ENCODE measurements at regions of chr3 and their contacts with region 1.

Region 1: DNA sequence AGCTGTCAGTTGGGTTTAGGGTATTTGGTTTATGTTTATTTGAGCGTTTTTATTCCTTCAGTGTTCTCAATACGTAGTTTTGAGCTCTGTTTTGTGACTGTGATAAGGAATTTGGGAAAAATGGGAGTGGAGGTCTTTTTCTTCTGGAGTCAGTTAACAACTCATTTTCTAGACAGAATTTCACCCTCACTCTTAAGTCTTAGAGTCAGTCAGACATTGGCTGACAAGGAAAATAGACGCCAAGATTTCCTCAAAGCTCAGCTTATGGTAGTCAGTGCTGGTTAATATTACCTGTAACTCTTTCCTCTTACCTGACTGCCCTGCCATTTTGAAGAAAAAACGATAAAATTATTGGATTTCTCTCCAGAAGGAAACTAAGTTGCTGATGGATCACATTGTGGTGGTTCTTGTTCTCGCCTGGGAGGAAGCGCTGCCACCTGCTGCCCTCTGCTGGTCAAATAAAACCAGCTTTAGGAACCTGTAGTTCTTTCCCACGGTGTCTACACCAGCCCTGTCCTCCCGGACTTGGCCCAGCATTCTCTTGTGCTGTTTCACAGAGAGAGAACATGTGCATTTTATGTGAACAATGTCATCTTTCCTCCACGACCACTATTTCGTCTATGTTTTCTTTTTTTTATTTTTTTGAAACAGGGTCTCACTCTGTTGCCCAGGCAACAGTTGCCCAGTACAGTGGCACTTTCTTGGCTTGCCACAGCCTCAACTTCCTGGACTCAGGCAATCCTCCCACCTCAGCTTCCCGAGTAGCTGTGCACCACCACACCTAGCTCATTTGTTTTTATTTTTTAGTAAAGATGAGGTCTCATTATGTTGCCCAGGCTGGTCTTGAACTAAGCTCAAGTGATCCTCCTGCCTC is 41.4 kb upstream of the UMPS start:
- DNase-seq: peak; percentile 30
- ATAC-seq: peak; percentile 94
- H3K4me3 ChIP-seq: no peak overlapping the region
- H3K27ac ChIP-seq: no peak overlapping the region
- H3K4me1 ChIP-seq: no peaks in the 10 kb centered on the region
- H3K27me3 ChIP-seq: no peaks in the 10 kb centered on the region
- CTCF ChIP-seq: peak; percentile 75 to 95 (median 79); a peak in 5 of 6 replicates
- EP300 ChIP-seq: no peak
- POLR2A ChIP-seq: no peak
- RAD21 ChIP-seq: peak; percentile 91

Region 2: GRCh38 chr3:124552239-124552638 is 136.6 kb before region 1 on chr3:
- CTCF ChIA-PET with region 1: interaction called, 577 read pairs
- POLR2A ChIA-PET with region 1: no interaction called
- RAD21 ChIA-PET with region 1: interaction called, 4 read pairs
- SMC1A ChIA-PET with region 1: interaction called, 5 read pairs
- in situ Hi-C with region 1: no loop called
- intact Hi-C with region 1: no loop called
- DNase-seq: no peak
- ATAC-seq: no peak
- H3K4me3 ChIP-seq: no peak overlapping the region
- H3K27ac ChIP-seq: no peak overlapping the region
- H3K4me1 ChIP-seq: no peaks in the 10 kb centered on the region
- H3K27me3 ChIP-seq: no peaks in the 10 kb centered on the region
- CTCF ChIP-seq: no peak
- EP300 ChIP-seq: no peak
- POLR2A ChIP-seq: no peak
- RAD21 ChIP-seq: no peak

Region 3: GRCh38 chr3:124592621-124593441 is 96.0 kb before region 1 on chr3:
- CTCF ChIA-PET with region 1: interaction called, 12 read pairs
- POLR2A ChIA-PET with region 1: no interaction called
- RAD21 ChIA-PET with region 1: interaction called, 8 read pairs
- SMC1A ChIA-PET with region 1: interaction called, 11 read pairs
- in situ Hi-C with region 1: no loop called
- intact Hi-C with region 1: no loop called
- DNase-seq: peak; percentile 70
- ATAC-seq: peak; percentile 91
- H3K4me3 ChIP-seq: peak overlapping the region; percentile 7; the same call in 1 of the 2 replicates
- H3K27ac ChIP-seq: peak overlapping the region; percentile 67
- H3K4me1 ChIP-seq: peaks cover 22% of the 10 kb centered on the region
- H3K27me3 ChIP-seq: no peaks in the 10 kb centered on the region
- CTCF ChIP-seq: no peak
- EP300 ChIP-seq: peak; percentile 11 to 14; a peak in 2 of 4 replicates
- POLR2A ChIP-seq: no peak
- RAD21 ChIP-seq: 0 out of 2 replicates have a peak, but pooled peaks have one; percentile 4

Region 4: DNA sequence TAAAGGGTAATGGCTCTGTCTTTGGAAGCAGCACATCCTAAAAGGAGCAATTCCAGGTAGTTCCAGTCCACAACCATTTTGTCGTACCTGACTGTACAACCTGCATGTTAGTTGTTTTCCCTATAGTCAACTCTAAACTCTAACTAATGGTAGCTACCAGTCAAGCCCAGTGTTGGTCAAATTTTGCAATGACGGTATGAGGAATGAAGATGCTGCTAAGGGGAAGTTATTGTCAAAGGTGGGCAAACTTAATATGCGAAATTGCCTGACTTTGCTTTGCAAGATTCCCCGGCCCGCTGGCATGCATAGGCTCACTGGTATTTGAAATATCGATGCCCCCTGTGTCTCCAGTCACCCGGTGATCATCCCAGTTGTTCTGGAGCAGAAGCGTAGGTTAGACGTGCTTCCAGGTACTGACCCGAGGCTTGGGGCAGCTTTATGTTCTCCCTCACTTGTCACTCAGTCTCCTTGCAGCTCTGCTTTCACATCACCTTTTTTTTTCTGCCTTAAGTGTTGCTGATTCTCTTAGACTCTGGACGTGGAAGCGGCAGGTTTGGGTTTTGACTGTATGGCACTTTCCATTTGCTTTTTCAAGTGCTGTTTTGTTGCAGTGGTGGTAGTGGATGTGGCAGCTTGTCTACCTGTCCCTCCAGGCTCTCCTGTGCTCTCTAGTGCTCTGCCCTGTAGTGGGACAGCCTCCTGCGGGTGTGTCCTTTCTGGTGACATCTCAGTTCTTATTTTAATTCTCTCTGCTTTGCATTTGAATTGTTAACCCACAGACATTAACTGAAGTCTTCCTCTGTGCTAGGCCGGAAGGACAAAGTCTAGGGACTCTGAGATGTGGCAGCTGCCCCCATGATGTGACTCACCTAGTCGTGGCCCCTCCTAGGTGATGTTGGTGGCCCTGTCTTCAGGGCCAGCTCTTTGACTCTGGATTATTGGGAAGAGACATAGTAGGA is 54.3 kb before region 1 on chr3:
- CTCF ChIA-PET with region 1: interaction called, 14 read pairs
- POLR2A ChIA-PET with region 1: no interaction called
- RAD21 ChIA-PET with region 1: interaction called, 17 read pairs
- SMC1A ChIA-PET with region 1: interaction called, 26 read pairs
- in situ Hi-C with region 1: no loop called
- intact Hi-C with region 1: loop called (anchors 10 kb)
- DNase-seq: no peak
- ATAC-seq: peak; percentile 53
- H3K4me3 ChIP-seq: no peak overlapping the region
- H3K27ac ChIP-seq: no peak overlapping the region
- H3K4me1 ChIP-seq: peaks cover 22% of the 10 kb centered on the region
- H3K27me3 ChIP-seq: no peaks in the 10 kb centered on the region
- CTCF ChIP-seq: no peak
- EP300 ChIP-seq: no peak
- POLR2A ChIP-seq: no peak
- RAD21 ChIP-seq: no peak

Region 5: GRCh38 chr3:124660599-124660998 is 28.2 kb before region 1 on chr3:
- CTCF ChIA-PET with region 1: interaction called, 21 read pairs
- POLR2A ChIA-PET with region 1: no interaction called
- RAD21 ChIA-PET with region 1: interaction called, 5 read pairs
- SMC1A ChIA-PET with region 1: interaction called, 9 read pairs
- in situ Hi-C with region 1: no loop called
- intact Hi-C with region 1: no loop called
- DNase-seq: no peak
- ATAC-seq: no peak
- H3K4me3 ChIP-seq: no peak overlapping the region
- H3K27ac ChIP-seq: no peak overlapping the region
- H3K4me1 ChIP-seq: peaks cover 10% of the 10 kb centered on the region; the same call in 1 of the 2 replicates
- H3K27me3 ChIP-seq: no peaks in the 10 kb centered on the region
- CTCF ChIP-seq: no peak
- EP300 ChIP-seq: no peak
- POLR2A ChIP-seq: no peak
- RAD21 ChIP-seq: no peak

Region 6: DNA sequence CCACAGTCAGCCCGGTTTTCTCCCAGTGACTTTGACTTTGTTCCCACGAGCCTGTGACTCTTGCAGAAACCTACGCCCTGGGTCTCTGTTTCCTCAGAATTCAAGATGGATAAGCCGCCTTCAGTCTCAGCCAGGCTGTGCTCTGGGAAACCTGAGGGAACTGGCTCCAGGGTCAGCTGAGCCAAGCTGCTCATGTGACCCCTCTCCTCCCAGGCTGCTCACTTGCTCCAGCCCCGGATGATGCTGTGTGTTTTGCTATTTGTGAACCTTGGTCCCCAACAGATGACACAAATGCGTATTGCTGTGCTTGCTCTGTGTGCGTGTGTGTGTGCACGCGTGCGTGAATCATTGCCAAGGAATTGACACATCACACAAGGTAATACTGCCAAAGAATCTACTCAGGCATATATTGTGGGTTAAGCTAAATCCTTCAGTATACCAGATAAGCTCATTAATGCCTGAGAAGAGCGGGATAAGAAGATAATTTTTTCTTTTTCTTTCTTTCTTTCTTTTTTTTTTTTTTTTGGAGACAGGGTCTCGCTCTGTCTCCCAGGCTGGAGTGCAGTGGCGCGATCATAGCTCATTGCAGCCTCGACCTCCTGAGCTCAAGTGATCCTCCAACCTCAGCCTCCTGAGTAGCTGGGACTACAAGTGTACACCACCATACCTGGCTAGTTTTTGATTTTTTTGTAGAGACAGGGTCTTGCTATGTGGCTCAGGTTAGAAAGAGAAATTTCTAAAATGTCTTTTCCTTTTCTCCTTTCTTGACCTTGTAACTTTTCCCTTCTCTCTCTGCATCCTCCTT is 12.3 kb after region 1 on chr3:
- CTCF ChIA-PET with region 1: interaction called, 21 read pairs
- POLR2A ChIA-PET with region 1: no interaction called
- RAD21 ChIA-PET with region 1: interaction called, 3 read pairs
- SMC1A ChIA-PET with region 1: interaction called, 25 read pairs
- in situ Hi-C with region 1: no loop called
- intact Hi-C with region 1: no loop called
- DNase-seq: no peak
- ATAC-seq: no peak
- H3K4me3 ChIP-seq: no peak overlapping the region
- H3K27ac ChIP-seq: no peak overlapping the region
- H3K4me1 ChIP-seq: no peaks in the 10 kb centered on the region
- H3K27me3 ChIP-seq: no peaks in the 10 kb centered on the region; a peak in 1 of 4 replicates
- CTCF ChIP-seq: no peak
- EP300 ChIP-seq: no peak
- POLR2A ChIP-seq: no peak
- RAD21 ChIP-seq: no peak

Measured in GM12878 (cell line).